ENCODE measurements at regions of chr4 and their contacts with region 1.

Region 1: DNA sequence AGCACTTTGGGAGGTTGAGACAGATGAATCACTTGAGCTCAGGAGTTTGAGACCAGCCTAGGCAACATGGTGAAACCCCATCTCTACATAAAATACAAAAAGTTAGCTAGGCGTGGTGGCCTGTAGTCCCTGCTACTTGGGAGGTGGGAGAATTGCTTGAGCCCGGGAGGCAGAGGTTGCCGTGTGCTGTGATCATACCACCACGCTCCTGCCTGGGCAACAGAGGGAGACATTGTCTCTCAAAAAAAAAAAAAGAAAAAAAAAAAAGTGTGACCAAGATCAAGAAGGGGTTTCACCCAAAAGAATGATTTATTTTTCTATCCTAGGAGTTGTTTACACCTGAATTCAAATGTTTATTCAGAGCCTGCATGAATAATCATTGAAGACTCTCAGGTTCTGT is 572.4 kb upstream of the GALNT7 start:
- DNase-seq: peak; percentile 11
- ATAC-seq: 0 out of 2 replicates have a peak, but pooled peaks have one; percentile 37
- H3K4me3 ChIP-seq: no peak overlapping the region
- H3K27ac ChIP-seq: no peak overlapping the region
- H3K4me1 ChIP-seq: peaks cover 8% of the 10 kb centered on the region
- H3K27me3 ChIP-seq: no peaks in the 10 kb centered on the region
- CTCF ChIP-seq: peak; percentile 46

Region 2: GRCh38 chr4:172480471-172480870 is 115.7 kb before region 1 on chr4:
- CTCF ChIA-PET with region 1: no interaction called
- POLR2A ChIA-PET with region 1: no interaction called
- intact Hi-C with region 1: no loop called
- DNase-seq: no peak
- ATAC-seq: no peak
- H3K4me3 ChIP-seq: no peak overlapping the region
- H3K27ac ChIP-seq: no peak overlapping the region
- H3K4me1 ChIP-seq: no peaks in the 10 kb centered on the region
- H3K27me3 ChIP-seq: peaks cover 11% of the 10 kb centered on the region; the same call in 1 of the 2 replicates
- CTCF ChIP-seq: no peak

Region 3: GRCh38 chr4:172648471-172648870 is 52.3 kb after region 1 on chr4:
- CTCF ChIA-PET with region 1: no interaction called
- POLR2A ChIA-PET with region 1: interaction called, 10 read pairs
- intact Hi-C with region 1: no loop called
- DNase-seq: peak; percentile 71
- ATAC-seq: peak; percentile 74
- H3K4me3 ChIP-seq: no peak overlapping the region
- H3K27ac ChIP-seq: peak overlapping the region; percentile 25
- H3K4me1 ChIP-seq: peaks cover 14% of the 10 kb centered on the region
- H3K27me3 ChIP-seq: no peaks in the 10 kb centered on the region
- CTCF ChIP-seq: no peak

Region 4: GRCh38 chr4:172802032-172802431 is 205.8 kb after region 1 on chr4:
- CTCF ChIA-PET with region 1: no interaction called
- POLR2A ChIA-PET with region 1: no interaction called
- intact Hi-C with region 1: loop called (anchors 2 kb)
- DNase-seq: no peak
- ATAC-seq: no peak
- H3K4me3 ChIP-seq: no peak overlapping the region
- H3K27ac ChIP-seq: no peak overlapping the region
- H3K4me1 ChIP-seq: no peaks in the 10 kb centered on the region
- H3K27me3 ChIP-seq: no peaks in the 10 kb centered on the region
- CTCF ChIP-seq: no peak

Region 5: DNA sequence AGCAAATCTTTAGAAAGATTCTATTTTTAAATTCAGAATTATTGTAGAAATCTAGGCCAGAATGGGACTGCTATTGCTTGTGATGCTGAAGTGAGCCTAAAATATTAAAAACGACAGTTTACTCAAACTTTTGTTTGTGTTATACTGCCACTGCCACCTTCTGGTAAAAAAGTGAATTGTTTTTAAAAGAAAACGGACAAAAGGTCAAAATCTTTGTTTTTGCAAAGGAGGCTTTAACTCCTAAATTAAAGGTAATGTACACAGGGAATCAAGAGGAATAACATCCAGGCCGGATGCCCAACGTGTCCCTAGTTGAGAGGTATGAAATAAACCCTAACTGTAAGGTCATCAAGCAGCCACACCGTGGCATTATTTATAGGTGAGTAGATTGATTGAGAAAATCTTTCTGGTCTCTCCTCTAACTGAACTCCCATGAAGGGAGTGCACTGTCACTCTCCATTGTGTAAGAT is 234.1 kb after region 1 on chr4:
- CTCF ChIA-PET with region 1: no interaction called
- POLR2A ChIA-PET with region 1: no interaction called
- intact Hi-C with region 1: loop called (anchors 1 kb)
- DNase-seq: peak; percentile 62
- ATAC-seq: no peak
- H3K4me3 ChIP-seq: no peak overlapping the region
- H3K27ac ChIP-seq: no peak overlapping the region
- H3K4me1 ChIP-seq: peaks cover 6% of the 10 kb centered on the region; the same call in 1 of the 2 replicates
- H3K27me3 ChIP-seq: no peaks in the 10 kb centered on the region
- CTCF ChIP-seq: peak; percentile 69

Region 6: GRCh38 chr4:173424899-173425805 is 828.9 kb after region 1 on chr4:
- CTCF ChIA-PET with region 1: no interaction called
- POLR2A ChIA-PET with region 1: no interaction called
- intact Hi-C with region 1: no loop called
- DNase-seq: peak; percentile 20
- ATAC-seq: no peak
- H3K4me3 ChIP-seq: no peak overlapping the region
- H3K27ac ChIP-seq: no peak overlapping the region
- H3K4me1 ChIP-seq: peaks cover 6% of the 10 kb centered on the region; the same call in 1 of the 2 replicates
- H3K27me3 ChIP-seq: no peaks in the 10 kb centered on the region
- CTCF ChIP-seq: no peak

Measured in PC-3 (cell line).